ENCODE measurements at regions of chr4 and their contacts with region 1.

Region 1: GRCh38 chr4:40840985-40841571 is 91.3 kb downstream of the NSUN7 start:
- DNase-seq: peak; percentile 79
- ATAC-seq: peak; percentile 57
- H3K4me3 ChIP-seq: peak overlapping the region in 1 of 5 experiments; percentile 37
- H3K4me3 Mint-ChIP-seq: peak overlapping the region; percentile 77
- H3K27ac ChIP-seq: peak overlapping the region; percentile 53 to 56
- H3K27ac Mint-ChIP-seq: peak overlapping the region; percentile 88
- H3K4me1 ChIP-seq: peaks cover 33 to 47% of the 10 kb centered on the region in 2 donors
- H3K4me1 Mint-ChIP-seq: peaks cover 42% of the 10 kb centered on the region
- H3K27me3 ChIP-seq: no peaks in the 10 kb centered on the region
- H3K27me3 Mint-ChIP-seq: peaks cover 2% of the 10 kb centered on the region
- CTCF ChIP-seq: peak; percentile 65

Region 2: DNA sequence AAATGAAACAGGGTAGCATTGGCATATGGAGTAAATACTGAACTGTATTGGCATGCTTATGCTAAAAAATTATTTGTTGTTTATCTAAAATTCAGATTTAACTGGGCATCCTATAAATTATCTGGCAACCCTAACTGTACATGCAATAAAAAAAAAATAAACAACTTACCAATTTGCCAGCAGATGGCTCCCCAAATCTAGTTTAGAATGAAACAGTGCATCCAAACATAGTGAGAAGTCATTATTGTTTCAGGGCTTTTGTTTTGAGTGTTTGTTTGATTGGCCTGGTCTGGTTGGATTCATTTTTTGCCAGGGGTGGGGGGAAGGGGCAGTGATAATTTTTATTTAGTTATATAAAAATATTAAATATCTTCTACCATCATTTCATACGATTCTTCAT is 104.2 kb before region 1 on chr4:
- CTCF ChIA-PET with region 1: interaction called, 102 read pairs
- POLR2A ChIA-PET with region 1: no interaction called
- intact Hi-C with region 1: loop called (anchors 1 kb)
- DNase-seq: peak; percentile 56
- ATAC-seq: no peak
- H3K4me3 ChIP-seq: no peak overlapping the region
- H3K4me3 Mint-ChIP-seq: no peak overlapping the region
- H3K27ac ChIP-seq: no peak overlapping the region
- H3K27ac Mint-ChIP-seq: no peak overlapping the region
- H3K4me1 ChIP-seq: peaks cover 0 to 2% of the 10 kb centered on the region in 2 donors
- H3K4me1 Mint-ChIP-seq: peaks cover 5% of the 10 kb centered on the region
- H3K27me3 ChIP-seq: no peaks in the 10 kb centered on the region
- H3K27me3 Mint-ChIP-seq: peaks cover 3% of the 10 kb centered on the region
- CTCF ChIP-seq: peak; percentile 57

Region 3: GRCh38 chr4:40800064-40800463 is 41.0 kb before region 1 on chr4:
- CTCF ChIA-PET with region 1: interaction called, 16 read pairs
- POLR2A ChIA-PET with region 1: no interaction called
- intact Hi-C with region 1: no loop called
- DNase-seq: peak; percentile 34
- ATAC-seq: peak; percentile 61
- H3K4me3 ChIP-seq: peak overlapping the region in 1 of 5 experiments; percentile 35
- H3K4me3 Mint-ChIP-seq: peak overlapping the region; percentile 51
- H3K27ac ChIP-seq: no peak overlapping the region
- H3K27ac Mint-ChIP-seq: peak overlapping the region; percentile 60
- H3K4me1 ChIP-seq: peaks cover 10% of the 10 kb centered on the region in 2 donors
- H3K4me1 Mint-ChIP-seq: peaks cover 19% of the 10 kb centered on the region
- H3K27me3 ChIP-seq: no peaks in the 10 kb centered on the region
- H3K27me3 Mint-ChIP-seq: no peaks in the 10 kb centered on the region
- CTCF ChIP-seq: no peak

Region 4: GRCh38 chr4:40897557-40898203 is 56.6 kb after region 1 on chr4:
- CTCF ChIA-PET with region 1: interaction called, 60 read pairs
- POLR2A ChIA-PET with region 1: no interaction called
- intact Hi-C with region 1: loop called (anchors 1 kb)
- DNase-seq: peak; percentile 75
- ATAC-seq: peak; percentile 73
- H3K4me3 ChIP-seq: peak overlapping the region in 2 of 5 experiments; percentile 1 to 19
- H3K4me3 Mint-ChIP-seq: peak overlapping the region; percentile 75
- H3K27ac ChIP-seq: no peak overlapping the region
- H3K27ac Mint-ChIP-seq: peak overlapping the region; percentile 70
- H3K4me1 ChIP-seq: peaks cover 4 to 5% of the 10 kb centered on the region in 2 donors
- H3K4me1 Mint-ChIP-seq: peaks cover 7% of the 10 kb centered on the region
- H3K27me3 ChIP-seq: no peaks in the 10 kb centered on the region
- H3K27me3 Mint-ChIP-seq: no peaks in the 10 kb centered on the region
- CTCF ChIP-seq: peak; percentile 96

Region 5: DNA sequence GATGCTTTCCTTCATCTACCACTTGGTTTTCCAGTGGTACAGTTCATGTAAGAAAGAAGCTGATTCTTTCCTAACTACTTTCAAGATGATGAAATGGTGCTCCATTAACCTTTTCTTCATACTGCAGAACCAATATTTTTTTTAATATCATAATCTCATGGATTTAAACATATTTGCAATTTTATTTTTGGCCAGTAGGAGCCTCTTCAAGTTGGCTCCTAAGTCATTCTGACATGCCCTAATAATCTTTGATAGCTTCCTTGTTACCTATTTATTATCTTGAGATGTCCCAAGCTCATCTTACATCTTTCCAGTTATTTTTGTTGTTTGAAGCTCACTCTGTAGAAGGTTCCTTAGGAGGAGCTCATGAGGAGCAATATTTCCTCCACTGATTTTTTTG is 203.1 kb after region 1 on chr4:
- CTCF ChIA-PET with region 1: no interaction called
- POLR2A ChIA-PET with region 1: no interaction called
- intact Hi-C with region 1: no loop called
- DNase-seq: no peak
- ATAC-seq: no peak
- H3K4me3 ChIP-seq: no peak overlapping the region
- H3K4me3 Mint-ChIP-seq: no peak overlapping the region
- H3K27ac ChIP-seq: no peak overlapping the region
- H3K27ac Mint-ChIP-seq: no peak overlapping the region
- H3K4me1 ChIP-seq: no peaks in the 10 kb centered on the region
- H3K4me1 Mint-ChIP-seq: no peaks in the 10 kb centered on the region
- H3K27me3 ChIP-seq: no peaks in the 10 kb centered on the region
- H3K27me3 Mint-ChIP-seq: no peaks in the 10 kb centered on the region
- CTCF ChIP-seq: no peak

Region 6: DNA sequence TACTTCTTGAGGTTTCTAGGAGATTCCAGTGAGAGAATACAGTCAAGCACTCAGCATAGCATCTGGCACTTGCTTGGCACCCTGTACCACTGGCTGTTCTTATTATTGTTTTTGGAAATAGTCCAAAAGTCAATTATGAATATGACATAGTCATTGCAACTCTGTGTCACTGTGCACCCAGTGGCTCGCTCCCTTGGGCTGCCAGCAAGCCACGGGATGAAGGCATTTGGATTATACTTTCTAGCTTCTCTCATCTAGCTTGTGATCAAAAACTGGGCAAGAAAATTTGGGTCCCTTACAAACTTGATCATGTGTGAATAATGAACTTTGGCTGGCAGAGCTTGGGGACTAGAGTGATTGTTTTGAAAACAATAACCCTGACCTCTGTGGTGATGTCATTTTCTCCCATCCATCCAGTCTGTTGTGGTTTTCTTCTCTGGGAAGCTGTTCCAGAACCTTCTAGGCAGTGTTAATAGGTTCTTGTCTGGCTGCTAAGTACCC is 664.1 kb after region 1 on chr4:
- CTCF ChIA-PET with region 1: no interaction called
- POLR2A ChIA-PET with region 1: no interaction called
- intact Hi-C with region 1: no loop called
- DNase-seq: no peak
- ATAC-seq: no peak
- H3K4me3 ChIP-seq: no peak overlapping the region
- H3K4me3 Mint-ChIP-seq: no peak overlapping the region
- H3K27ac ChIP-seq: no peak overlapping the region
- H3K27ac Mint-ChIP-seq: no peak overlapping the region
- H3K4me1 ChIP-seq: no peaks in the 10 kb centered on the region
- H3K4me1 Mint-ChIP-seq: no peaks in the 10 kb centered on the region
- H3K27me3 ChIP-seq: no peaks in the 10 kb centered on the region
- H3K27me3 Mint-ChIP-seq: no peaks in the 10 kb centered on the region
- CTCF ChIP-seq: no peak

Measured in B cell (primary cell).